Heart left ventricle (tissue), 16 donors: ENCODE measurements at regions of chr2 and their contacts with region 1.

Region 1: GRCh38 chr2:207334624-207335371 is 169.1 kb upstream of the KLF7 start:
- DNase-seq: peak; percentile 66 to 87 (median 77)
- ATAC-seq: peak; percentile 61 to 86 (median 84)
- H3K4me3 ChIP-seq: peak overlapping the region in 10 of 12 donors; percentile 12 to 45 (median 36)
- H3K27ac ChIP-seq: peak overlapping the region; percentile 73 to 96 (median 90)
- H3K4me1 ChIP-seq: peaks cover 2 to 82% (median 37%) of the 10 kb centered on the region in 12 donors
- H3K27me3 ChIP-seq: no peaks in the 10 kb centered on the region
- CTCF ChIP-seq: peak in 1 of 12 donors; percentile 10
- POLR2A ChIP-seq: peak in 1 of 2 donors; percentile 32

Region 2: GRCh38 chr2:206800506-206801417 is 534.0 kb before region 1 on chr2:
- intact Hi-C with region 1: loop called in 1 of 10 experiments (anchors 10 kb)
- DNase-seq: peak in 4 of 5 donors; percentile 58 to 72 (median 64)
- ATAC-seq: peak; percentile 67 to 81 (median 73)
- H3K4me3 ChIP-seq: peak overlapping the region in 4 of 12 donors; percentile 20 to 36 (median 26)
- H3K27ac ChIP-seq: no peak overlapping the region
- H3K4me1 ChIP-seq: peaks cover 0 to 28% (median 9%) of the 10 kb centered on the region in 12 donors
- H3K27me3 ChIP-seq: no peaks in the 10 kb centered on the region
- CTCF ChIP-seq: peak; percentile 56 to 82 (median 74)
- POLR2A ChIP-seq: no peak

Region 3: DNA sequence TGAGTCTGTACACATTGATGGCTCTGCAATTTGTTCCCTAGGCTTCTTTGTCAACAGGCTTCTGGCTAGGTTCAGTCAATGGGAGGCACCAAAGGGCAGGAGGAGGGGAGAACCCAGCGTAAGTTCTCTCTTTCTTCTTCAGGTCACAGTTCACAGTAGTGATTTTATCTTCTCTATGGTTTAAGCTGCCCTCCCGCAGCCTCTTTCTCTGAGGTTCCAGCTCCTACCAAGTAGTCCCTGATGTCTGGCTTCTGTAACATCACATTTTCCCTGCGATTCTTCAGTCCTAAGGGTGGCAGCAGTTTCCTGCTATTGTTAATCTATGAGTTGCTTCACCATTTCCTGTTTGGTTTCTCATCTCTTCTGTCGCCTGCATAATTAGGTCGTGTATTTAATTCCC is 288.1 kb before region 1 on chr2:
- intact Hi-C with region 1: loop called in 1 of 10 experiments (anchors 10 kb)
- DNase-seq: no peak
- ATAC-seq: peak in 3 of 4 donors; percentile 65 to 77 (median 73)
- H3K4me3 ChIP-seq: no peak overlapping the region
- H3K27ac ChIP-seq: peak overlapping the region in 1 of 12 donors; percentile 0
- H3K4me1 ChIP-seq: peaks cover 0 to 22% (median 6%) of the 10 kb centered on the region in 12 donors
- H3K27me3 ChIP-seq: no peaks in the 10 kb centered on the region
- CTCF ChIP-seq: peak in 7 of 12 donors; percentile 29 to 50 (median 37)
- POLR2A ChIP-seq: no peak

Region 4: GRCh38 chr2:207091176-207091575 is 243.6 kb before region 1 on chr2:
- intact Hi-C with region 1: loop called in 1 of 10 experiments (anchors 10 kb)
- DNase-seq: peak in 1 of 5 donors; percentile 36
- ATAC-seq: peak; percentile 75 to 87 (median 85)
- H3K4me3 ChIP-seq: no peak overlapping the region
- H3K27ac ChIP-seq: peak overlapping the region; percentile 61 to 89 (median 74)
- H3K4me1 ChIP-seq: peaks cover 30 to 100% (median 88%) of the 10 kb centered on the region in 12 donors
- H3K27me3 ChIP-seq: no peaks in the 10 kb centered on the region
- CTCF ChIP-seq: no peak
- POLR2A ChIP-seq: no peak

Region 5: DNA sequence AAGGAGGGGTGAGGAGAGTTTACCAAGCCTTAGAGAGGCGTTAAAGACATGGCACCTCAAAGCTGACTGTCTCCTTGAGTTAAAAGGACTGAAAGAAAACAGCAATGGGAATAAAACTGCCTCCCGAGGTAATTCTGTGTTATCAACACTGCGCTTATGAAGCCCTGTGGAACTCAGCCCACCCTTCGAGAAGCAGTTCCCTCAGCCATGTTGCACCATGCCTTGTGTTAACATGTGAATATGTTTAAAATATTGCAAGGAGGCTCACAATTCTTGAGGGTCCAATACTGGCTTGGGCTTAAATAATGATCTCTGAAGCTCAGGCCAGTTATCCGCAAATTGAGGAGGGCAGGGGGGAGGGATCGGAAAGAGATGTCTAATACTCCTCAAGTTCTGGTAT is 183.8 kb before region 1 on chr2:
- intact Hi-C with region 1: no loop called
- DNase-seq: no peak
- ATAC-seq: no peak
- H3K4me3 ChIP-seq: peak overlapping the region in 1 of 12 donors; percentile 3
- H3K27ac ChIP-seq: peak overlapping the region in 11 of 12 donors; percentile 2 to 86 (median 36)
- H3K4me1 ChIP-seq: peaks cover 27 to 100% (median 92%) of the 10 kb centered on the region in 12 donors
- H3K27me3 ChIP-seq: no peaks in the 10 kb centered on the region
- CTCF ChIP-seq: no peak
- POLR2A ChIP-seq: no peak

Region 6: DNA sequence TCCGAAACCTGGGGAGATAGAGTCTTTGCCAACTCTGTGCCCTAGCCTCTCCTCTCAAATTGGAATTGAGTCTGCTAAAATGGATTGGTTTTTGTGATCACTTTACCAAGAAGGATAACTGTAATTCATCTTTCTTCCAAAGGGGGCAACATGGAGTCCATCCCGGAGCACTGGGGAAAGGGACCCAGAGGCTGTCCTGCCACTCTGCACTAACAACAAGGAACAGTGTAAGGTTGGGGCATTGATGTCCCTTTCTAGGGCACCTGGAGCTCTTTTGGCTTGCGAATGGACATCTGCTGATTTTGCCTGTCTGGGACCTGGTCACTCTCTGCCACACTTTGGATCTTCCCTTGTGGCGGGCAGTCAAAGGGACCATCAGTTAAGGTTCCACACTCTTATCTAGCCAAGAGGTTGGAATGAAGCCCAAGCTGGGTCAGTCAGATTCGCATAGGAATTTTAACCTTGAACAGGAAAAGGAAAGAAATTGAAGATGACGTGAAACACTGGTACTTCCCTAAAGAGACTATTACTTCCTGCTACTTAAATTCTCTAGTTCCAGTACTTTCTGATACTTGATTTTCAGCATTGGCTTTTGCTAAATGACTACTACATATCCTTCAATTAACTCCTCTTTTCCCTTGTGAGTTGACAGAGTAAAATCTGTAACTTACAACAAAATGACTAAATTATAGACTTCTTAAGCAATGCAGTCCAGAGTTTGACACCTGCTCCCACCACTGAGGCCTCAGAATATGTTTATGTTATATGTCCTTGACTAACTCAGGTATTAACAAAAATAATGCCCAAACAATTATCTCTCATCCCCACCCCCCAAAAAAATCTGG is 104.3 kb before region 1 on chr2:
- intact Hi-C with region 1: loop called in 1 of 10 experiments (anchors 5 kb)
- DNase-seq: no peak
- ATAC-seq: peak in 2 of 4 donors; percentile 48 to 54
- H3K4me3 ChIP-seq: no peak overlapping the region
- H3K27ac ChIP-seq: peak overlapping the region in 5 of 12 donors; percentile 3 to 30 (median 27)
- H3K4me1 ChIP-seq: peaks cover 0 to 46% (median 23%) of the 10 kb centered on the region in 12 donors
- H3K27me3 ChIP-seq: no peaks in the 10 kb centered on the region
- CTCF ChIP-seq: peak; percentile 27 to 65 (median 46)
- POLR2A ChIP-seq: no peak

Region 7: GRCh38 chr2:207258263-207258991 is 76.4 kb before region 1 on chr2:
- intact Hi-C with region 1: loop called in 1 of 10 experiments (anchors 1 kb)
- DNase-seq: peak in 4 of 5 donors; percentile 51 to 84 (median 62)
- ATAC-seq: peak; percentile 74 to 90 (median 89)
- H3K4me3 ChIP-seq: no peak overlapping the region
- H3K27ac ChIP-seq: peak overlapping the region; percentile 30 to 77 (median 56)
- H3K4me1 ChIP-seq: peaks cover 15 to 65% (median 42%) of the 10 kb centered on the region in 12 donors
- H3K27me3 ChIP-seq: no peaks in the 10 kb centered on the region
- CTCF ChIP-seq: no peak
- POLR2A ChIP-seq: no peak